ENCODE measurements at regions of chr3 and their contacts with region 1.

Region 1: DNA sequence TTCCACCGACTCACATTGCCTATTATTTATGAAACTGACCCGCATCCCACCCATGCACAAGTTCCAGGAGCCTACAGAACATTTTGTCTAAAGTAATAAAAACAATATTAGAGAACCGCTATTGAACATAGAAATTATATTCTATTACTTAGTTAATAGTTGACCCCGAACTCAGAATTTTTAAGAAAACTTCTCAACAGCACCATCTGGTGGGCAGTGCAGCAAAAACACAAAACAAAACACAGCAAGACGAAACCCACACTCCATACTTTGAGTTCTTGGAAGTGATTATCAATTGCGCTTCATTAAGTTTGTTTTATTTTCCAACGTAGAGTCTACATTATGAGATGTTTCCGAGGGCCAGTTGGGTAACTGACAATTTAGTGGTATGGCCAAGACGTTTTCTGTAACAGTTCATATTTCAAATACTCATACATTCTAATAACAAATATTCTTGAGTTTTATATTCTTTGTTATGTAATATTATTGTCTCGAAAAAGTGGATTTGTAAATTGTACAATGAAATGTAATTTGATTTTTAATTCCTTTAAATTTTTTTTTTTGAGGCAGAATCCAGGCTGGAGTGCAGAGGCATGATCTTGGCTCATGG is 24.0 kb upstream of the C3orf70 start:
- DNase-seq: no peak
- H3K4me3 ChIP-seq: no peak overlapping the region
- H3K27ac ChIP-seq: no peak overlapping the region
- H3K4me1 ChIP-seq: no peaks in the 10 kb centered on the region
- H3K27me3 ChIP-seq: peaks cover 0 to 3% of the 10 kb centered on the region in 2 donors
- CTCF ChIP-seq: peak; percentile 60

Region 2: DNA sequence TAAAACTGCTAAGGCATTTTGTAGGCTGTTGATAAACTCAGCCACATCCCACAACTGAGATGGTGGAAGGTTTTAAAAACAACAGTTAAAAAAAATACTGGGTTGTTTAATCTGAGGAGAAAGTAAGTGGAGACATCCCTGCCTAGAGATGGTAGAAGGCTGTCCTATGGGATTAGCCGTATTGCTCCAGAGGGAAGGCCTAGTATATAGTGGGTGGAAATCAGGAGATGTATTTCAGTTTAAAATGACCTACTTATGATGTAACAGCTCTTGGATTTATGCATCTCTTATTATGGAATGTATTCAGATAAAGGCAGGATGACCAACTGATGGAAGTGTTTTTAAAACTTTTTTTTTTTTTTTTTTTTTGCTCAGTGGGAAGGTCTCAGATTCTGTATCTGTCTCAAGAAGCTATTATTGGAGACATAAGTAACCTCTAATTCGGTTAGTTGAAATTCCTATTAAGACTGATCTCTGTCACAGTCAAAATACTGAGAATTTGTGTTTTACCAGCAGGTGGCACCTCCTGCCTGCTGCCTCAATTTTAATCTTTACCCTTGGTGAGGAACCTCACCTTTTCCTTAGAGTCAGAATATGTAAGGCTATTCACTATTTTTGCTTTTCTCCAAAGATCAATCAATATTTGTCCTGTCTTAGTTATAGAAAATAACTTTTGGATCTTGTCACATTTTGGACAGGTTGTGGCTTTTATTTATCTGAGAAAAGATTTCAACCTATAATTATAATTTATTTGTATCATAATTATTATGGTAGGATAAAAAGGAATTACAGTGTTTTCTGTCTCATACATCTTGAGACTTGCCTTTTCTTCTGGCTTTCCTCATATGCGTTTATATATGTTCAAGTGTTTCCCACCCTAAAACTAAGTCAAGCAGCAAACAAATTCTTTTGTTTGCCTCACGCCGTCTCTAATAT is 301.9 kb before region 1 on chr3:
- intact Hi-C with region 1: loop called (anchors 5 kb)
- DNase-seq: no peak
- H3K4me3 ChIP-seq: no peak overlapping the region
- H3K27ac ChIP-seq: no peak overlapping the region
- H3K4me1 ChIP-seq: no peaks in the 10 kb centered on the region
- H3K27me3 ChIP-seq: no peaks in the 10 kb centered on the region
- CTCF ChIP-seq: peak; percentile 46 to 51

Region 3: GRCh38 chr3:185069037-185070030 is 107.5 kb before region 1 on chr3:
- intact Hi-C with region 1: loop called (anchors 5 kb)
- DNase-seq: no peak
- H3K4me3 ChIP-seq: no peak overlapping the region
- H3K27ac ChIP-seq: no peak overlapping the region
- H3K4me1 ChIP-seq: no peaks in the 10 kb centered on the region
- H3K27me3 ChIP-seq: no peaks in the 10 kb centered on the region
- CTCF ChIP-seq: no peak

Region 4: DNA sequence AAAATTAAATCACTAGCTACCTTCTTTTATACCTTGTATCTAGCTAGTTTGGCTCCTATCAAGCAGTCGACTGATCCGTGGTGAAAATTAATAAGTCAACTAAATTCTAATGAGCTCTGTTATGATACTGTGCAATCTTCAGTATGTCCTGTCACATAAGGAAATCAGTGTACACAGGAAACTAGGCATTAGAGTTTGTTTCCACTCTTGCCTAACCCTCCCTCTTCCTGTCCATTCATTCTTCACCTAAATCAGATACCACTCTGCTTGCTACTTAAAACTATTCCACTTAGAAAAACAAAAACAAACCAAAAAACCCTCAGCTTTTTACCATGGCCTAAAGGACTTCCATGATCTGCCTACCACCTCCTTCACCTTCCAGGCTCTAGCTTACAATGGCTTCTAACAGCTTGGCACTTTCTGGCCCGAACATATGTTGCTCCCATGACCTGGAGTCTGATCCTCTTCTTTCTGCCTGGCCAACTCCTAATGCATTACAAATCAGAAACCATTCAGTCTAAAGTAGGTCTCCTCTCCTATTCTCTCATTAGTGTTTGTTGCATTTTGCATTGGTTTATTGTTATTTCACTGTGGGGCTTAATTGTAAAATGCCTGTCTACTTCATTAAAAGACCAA is 1621.5 kb after region 1 on chr3:
- intact Hi-C with region 1: no loop called
- DNase-seq: no peak
- H3K4me3 ChIP-seq: no peak overlapping the region
- H3K27ac ChIP-seq: no peak overlapping the region
- H3K4me1 ChIP-seq: no peaks in the 10 kb centered on the region
- H3K27me3 ChIP-seq: no peaks in the 10 kb centered on the region
- CTCF ChIP-seq: no peak